Vagina (tissue), 2 donors: ENCODE measurements at regions of chr4 and their contacts with region 1.

Region 1: GRCh38 chr4:40924096-40924792 is 174.5 kb downstream of the NSUN7 start:
- DNase-seq: no peak
- H3K4me3 ChIP-seq: no peak overlapping the region
- H3K27ac ChIP-seq: no peak overlapping the region
- H3K4me1 ChIP-seq: no peaks in the 10 kb centered on the region
- H3K27me3 ChIP-seq: no peaks in the 10 kb centered on the region
- CTCF ChIP-seq: peak in 2 of 3 experiments; percentile 41 to 62
- POLR2A ChIP-seq: no peak

Region 2: DNA sequence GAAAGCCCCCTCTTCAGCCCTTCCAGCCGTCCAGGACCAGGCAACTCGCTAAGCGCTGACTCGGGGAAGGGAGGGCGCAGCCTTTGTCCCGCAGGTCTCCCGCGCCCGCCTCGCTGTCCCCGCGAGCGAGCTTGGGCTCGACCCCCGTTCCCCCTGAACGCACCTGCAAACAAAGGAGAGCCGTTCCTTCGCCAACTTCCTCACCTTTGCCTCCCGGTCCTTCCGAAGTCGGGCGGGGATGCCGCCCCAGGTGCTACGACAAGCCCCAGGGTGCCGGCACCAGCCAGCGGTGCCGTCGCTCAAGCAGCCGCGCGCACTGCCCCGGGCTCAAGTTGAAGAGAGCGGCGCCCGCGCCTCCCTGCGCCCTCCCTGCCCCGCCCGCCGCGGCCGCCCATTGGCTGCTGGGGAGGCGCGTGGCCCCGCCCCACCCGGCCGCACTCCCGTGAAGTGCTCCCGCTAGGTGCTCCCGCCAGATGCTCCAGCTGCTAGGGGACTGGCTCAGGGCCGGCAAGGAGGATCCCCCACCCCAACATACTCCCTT is 67.4 kb before region 1 on chr4:
- intact Hi-C with region 1: no loop called
- DNase-seq: no peak
- H3K4me3 ChIP-seq: peak overlapping the region; percentile 21 to 34
- H3K27ac ChIP-seq: no peak overlapping the region
- H3K4me1 ChIP-seq: peaks cover 6% of the 10 kb centered on the region
- H3K27me3 ChIP-seq: no peaks in the 10 kb centered on the region
- CTCF ChIP-seq: no peak
- POLR2A ChIP-seq: no peak

Region 3: GRCh38 chr4:41214136-41214824 is 290.0 kb after region 1 on chr4 and contains the start of gene APBB2:
- intact Hi-C with region 1: loop called (anchors 5 kb)
- DNase-seq: peak in 1 of 2 donors; percentile 95
- H3K4me3 ChIP-seq: peak within 1 kb of the TSS; percentile 91 to 95
- H3K27ac ChIP-seq: peak within 1 kb of the TSS; percentile 92
- H3K4me1 ChIP-seq: peaks cover 33% of the 10 kb centered on the region
- H3K27me3 ChIP-seq: no peaks in the 10 kb centered on the region
- CTCF ChIP-seq: peak in 1 of 3 experiments; percentile 93
- POLR2A ChIP-seq: peak in 1 of 2 donors; percentile 80
- total RNA-seq, gene APBB2: 68.8 TPM